Gastrocnemius medialis (tissue), 4 donors: ENCODE measurements at regions of chr2 and their contacts with region 1.

Region 1: GRCh38 chr2:238596571-238597551 is 170.1 kb downstream of the ASB1 start:
- DNase-seq: peak; percentile 71 to 77
- ATAC-seq: peak; percentile 86 to 87
- H3K4me3 ChIP-seq: peak overlapping the region in 2 of 4 donors; percentile 21 to 28
- H3K27ac ChIP-seq: peak overlapping the region; percentile 67 to 86 (median 76)
- H3K4me1 ChIP-seq: peaks cover 23 to 34% of the 10 kb centered on the region in 2 donors
- H3K27me3 ChIP-seq: no peaks in the 10 kb centered on the region
- CTCF ChIP-seq: no peak
- POLR2A ChIP-seq: peak; percentile 27 to 33

Region 2: DNA sequence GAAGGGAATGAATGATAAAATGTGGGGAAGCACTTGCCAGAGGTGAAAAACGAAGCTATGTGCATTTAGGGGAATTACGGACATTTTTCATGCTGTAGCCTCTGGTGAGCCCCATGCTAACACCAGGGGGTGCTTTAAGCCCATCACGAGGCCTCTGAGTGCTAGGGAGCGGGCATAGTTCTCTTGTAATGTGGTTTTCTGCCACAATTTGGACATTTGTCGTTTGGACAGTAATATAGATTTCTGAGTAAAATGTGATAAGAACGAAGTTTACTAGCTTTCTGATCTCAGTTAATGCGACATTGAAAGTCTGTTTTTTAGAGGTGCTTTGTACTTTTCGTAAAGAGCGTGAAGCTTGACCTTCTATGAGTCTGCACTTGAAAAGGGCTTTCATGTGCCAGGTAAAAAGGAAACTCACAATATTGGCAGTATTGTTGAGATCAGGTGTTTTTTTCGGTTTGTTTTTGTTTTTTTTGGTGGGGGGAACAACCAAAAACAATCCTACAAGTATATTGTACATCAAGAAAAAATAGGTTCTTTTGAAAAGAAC is 226.0 kb before region 1 on chr2:
- in situ Hi-C with region 1: loop called in 1 of 4 experiments (anchors 25 kb)
- intact Hi-C with region 1: no loop called
- DNase-seq: no peak
- ATAC-seq: peak; percentile 70 to 74
- H3K4me3 ChIP-seq: no peak overlapping the region
- H3K27ac ChIP-seq: no peak overlapping the region
- H3K4me1 ChIP-seq: peaks cover 0 to 3% of the 10 kb centered on the region in 2 donors
- H3K27me3 ChIP-seq: no peaks in the 10 kb centered on the region
- CTCF ChIP-seq: peak; percentile 60 to 74 (median 68)
- POLR2A ChIP-seq: no peak

Region 3: GRCh38 chr2:238389926-238390597 is 206.8 kb before region 1 on chr2:
- in situ Hi-C with region 1: no loop called
- intact Hi-C with region 1: loop called (anchors 5 kb)
- DNase-seq: peak; percentile 65 to 71
- ATAC-seq: peak; percentile 85 to 95
- H3K4me3 ChIP-seq: no peak overlapping the region
- H3K27ac ChIP-seq: peak overlapping the region; percentile 71 to 78 (median 76)
- H3K4me1 ChIP-seq: peaks cover 11 to 22% of the 10 kb centered on the region in 2 donors
- H3K27me3 ChIP-seq: no peaks in the 10 kb centered on the region
- CTCF ChIP-seq: no peak
- POLR2A ChIP-seq: no peak

Region 4: DNA sequence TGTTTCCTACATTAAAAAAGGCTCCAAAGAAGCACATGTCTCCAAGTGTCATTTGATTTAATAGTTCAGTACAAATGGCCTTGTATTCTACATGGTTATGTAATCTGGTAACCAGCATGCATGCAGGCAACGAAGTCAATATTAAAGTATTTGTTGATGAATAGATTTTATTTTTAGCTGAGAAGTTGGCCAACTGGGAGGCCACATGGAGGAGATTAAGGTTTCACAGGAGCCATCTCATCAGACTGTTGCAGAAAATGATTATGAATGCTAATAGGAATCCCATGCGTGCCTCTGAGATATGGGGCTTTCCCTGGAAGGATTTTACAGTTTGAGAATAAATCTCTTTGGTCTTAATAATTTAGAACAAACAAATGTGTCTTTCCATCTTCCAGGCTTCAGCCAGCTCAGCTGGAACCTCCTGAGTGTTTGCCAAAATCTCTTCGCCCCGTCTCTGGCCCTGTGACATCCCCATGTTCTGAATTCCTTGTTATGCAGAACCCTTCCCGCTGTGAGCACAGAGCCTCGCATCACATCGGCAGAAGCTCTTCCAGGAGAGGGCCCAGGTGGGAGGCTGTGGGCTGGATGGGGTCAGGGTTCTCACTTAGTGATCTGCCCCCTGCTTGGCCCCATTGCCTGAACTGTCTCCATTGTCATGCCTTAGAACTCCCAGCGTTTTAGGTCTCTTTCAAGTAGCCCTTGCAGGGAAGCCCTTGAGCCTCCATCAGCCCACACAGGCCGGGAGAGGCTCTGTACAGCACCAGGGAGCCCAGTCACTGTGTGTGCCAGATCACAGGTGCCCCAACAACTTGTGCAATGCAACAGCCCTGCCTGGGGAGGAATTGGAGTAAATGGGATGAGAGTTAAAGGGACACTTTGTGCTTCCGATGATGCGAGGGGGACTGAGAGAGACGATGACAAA is 60.5 kb after region 1 on chr2:
- in situ Hi-C with region 1: no loop called
- intact Hi-C with region 1: loop called (anchors 2 kb)
- DNase-seq: no peak
- ATAC-seq: peak; percentile 49 to 75
- H3K4me3 ChIP-seq: no peak overlapping the region
- H3K27ac ChIP-seq: peak overlapping the region in 2 of 4 donors; percentile 45 to 60
- H3K4me1 ChIP-seq: peaks cover 9 to 17% of the 10 kb centered on the region in 2 donors
- H3K27me3 ChIP-seq: no peaks in the 10 kb centered on the region
- CTCF ChIP-seq: no peak
- POLR2A ChIP-seq: no peak